Activated T-helper 1 cell treated with anti-CD3 and anti-CD28 coated beads, Interleukin-12 subunit alpha, Interleukin-12 subunit beta, Interleukin-2, Interleukin-4 antibody, amounts not matched to agents 30 ng/mL and 10 ng/mL and 1 ng/mL, durations not matched to agents 14 hours and 24 hours and 36 hours (primary cell): ENCODE measurements at regions of chr10 and their contacts with region 1.

Region 1: DNA sequence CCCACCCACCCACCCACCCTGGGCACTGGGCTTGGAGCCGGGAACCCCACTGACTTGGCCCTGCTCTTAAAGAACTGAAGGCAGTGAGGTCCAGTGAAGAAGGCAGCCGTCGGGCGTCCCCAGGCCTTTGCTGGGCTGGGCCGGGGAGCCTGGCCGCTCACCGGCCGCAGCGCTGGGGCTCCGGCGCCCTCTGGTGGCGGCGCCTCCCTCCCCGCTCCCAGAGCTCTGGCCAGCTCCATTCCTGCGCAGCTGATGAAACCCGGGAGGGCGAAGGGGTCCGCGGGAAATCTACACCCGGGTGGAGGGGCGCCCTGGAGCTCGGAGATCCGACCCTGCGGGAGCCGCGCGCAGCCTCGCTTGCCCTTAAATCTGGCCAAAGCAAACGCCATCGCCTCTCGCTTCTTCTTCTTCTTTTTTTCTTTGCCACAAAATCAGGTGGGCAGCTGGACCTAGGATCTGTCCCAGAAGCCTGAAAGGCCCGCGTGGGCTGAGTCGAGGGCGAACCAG is 1.7 kb upstream of the CXCL12 start:
- DNase-seq: no peak
- H3K4me3 Mint-ChIP-seq: no peak overlapping the region
- H3K27ac Mint-ChIP-seq: no peak overlapping the region
- H3K4me1 Mint-ChIP-seq: no peaks in the 10 kb centered on the region
- H3K27me3 Mint-ChIP-seq: peaks cover 26% of the 10 kb centered on the region

Region 2: GRCh38 chr10:44398747-44399658 is 12.4 kb after region 1 on chr10:
- intact Hi-C with region 1: no loop called
- DNase-seq: no peak
- H3K4me3 Mint-ChIP-seq: no peak overlapping the region
- H3K27ac Mint-ChIP-seq: no peak overlapping the region
- H3K4me1 Mint-ChIP-seq: no peaks in the 10 kb centered on the region
- H3K27me3 Mint-ChIP-seq: peaks cover 16% of the 10 kb centered on the region

Region 3: DNA sequence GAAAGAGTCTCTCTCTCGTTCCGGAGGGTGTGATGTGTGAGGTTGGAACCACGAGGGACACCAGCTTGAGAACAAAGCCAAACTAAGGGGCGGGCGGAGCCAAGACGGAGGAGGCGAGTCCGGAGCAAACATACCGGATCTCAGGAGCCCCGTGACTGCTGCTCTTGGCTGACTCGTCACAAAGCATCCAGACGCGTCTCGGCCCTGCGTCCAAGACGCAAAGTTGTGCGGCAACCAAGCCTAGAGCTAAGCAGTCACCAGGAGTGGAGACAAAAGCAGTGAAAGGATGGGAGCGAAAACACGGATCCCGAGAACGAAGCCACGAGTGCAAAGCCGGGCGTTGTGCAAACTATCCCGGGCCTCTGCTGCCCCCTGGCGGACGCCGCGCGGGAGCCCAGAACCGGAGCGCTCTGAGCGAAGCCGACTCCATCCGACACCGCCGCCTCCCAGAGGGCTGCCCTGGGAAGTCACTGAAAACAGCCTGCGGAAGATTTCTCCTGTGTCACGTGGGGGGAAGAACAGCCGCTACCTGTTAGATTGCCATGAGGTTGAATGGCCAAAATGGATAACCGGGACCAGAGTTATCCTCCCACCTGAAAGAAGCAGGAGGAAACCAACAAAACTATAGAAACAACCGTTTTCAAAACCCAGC is 478.2 kb after region 1 on chr10:
- intact Hi-C with region 1: loop called (anchors 5 kb)
- DNase-seq: peak; percentile 72
- H3K4me3 Mint-ChIP-seq: peak overlapping the region; percentile 89
- H3K27ac Mint-ChIP-seq: peak overlapping the region; percentile 54
- H3K4me1 Mint-ChIP-seq: peaks cover 17% of the 10 kb centered on the region
- H3K27me3 Mint-ChIP-seq: peaks cover 51% of the 10 kb centered on the region